ENCODE measurements at regions of chr1 and their contacts with region 1.

Region 1: DNA sequence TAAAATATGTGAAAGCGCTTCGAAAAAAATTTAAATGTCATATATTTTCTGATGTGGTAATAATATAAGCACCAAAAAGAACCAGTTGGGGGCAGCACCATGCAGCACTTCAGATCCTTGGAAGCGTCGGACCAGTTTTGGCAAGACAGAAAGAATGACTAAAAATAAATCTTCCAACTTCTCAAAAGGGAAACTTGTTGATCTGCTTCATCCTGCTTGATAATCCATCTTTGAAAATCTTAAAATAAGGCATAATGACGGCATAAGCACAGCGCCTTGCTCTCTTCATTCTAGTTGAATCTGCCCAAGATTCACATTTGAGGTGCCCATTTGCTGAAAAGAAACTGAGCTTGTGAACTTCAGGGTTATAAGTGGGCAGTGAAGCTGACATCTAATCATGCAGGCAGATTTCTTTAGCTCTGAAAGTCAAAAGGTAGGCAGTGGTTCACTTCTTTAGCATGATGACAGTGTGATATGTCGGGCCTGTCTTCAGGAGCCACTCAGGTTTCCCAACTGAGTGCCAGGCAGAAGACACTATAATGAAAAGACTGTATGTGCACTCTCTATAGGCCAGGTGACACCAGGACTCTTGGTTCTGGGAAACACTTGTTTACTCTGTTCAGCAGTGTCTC is 19.8 kb upstream of the MUTYH start:
- DNase-seq: peak; percentile 58
- H3K4me3 Mint-ChIP-seq: no peak overlapping the region
- H3K27ac Mint-ChIP-seq: no peak overlapping the region
- H3K4me1 Mint-ChIP-seq: peaks cover 17% of the 10 kb centered on the region
- H3K27me3 Mint-ChIP-seq: no peaks in the 10 kb centered on the region
- CTCF ChIP-seq: no peak

Region 2: GRCh38 chr1:45221716-45222115 is 138.3 kb before region 1 on chr1:
- CTCF ChIA-PET with region 1: no interaction called
- intact Hi-C with region 1: no loop called
- DNase-seq: no peak
- H3K4me3 Mint-ChIP-seq: no peak overlapping the region
- H3K27ac Mint-ChIP-seq: no peak overlapping the region
- H3K4me1 Mint-ChIP-seq: no peaks in the 10 kb centered on the region
- H3K27me3 Mint-ChIP-seq: peaks cover 28% of the 10 kb centered on the region
- CTCF ChIP-seq: no peak

Region 3: DNA sequence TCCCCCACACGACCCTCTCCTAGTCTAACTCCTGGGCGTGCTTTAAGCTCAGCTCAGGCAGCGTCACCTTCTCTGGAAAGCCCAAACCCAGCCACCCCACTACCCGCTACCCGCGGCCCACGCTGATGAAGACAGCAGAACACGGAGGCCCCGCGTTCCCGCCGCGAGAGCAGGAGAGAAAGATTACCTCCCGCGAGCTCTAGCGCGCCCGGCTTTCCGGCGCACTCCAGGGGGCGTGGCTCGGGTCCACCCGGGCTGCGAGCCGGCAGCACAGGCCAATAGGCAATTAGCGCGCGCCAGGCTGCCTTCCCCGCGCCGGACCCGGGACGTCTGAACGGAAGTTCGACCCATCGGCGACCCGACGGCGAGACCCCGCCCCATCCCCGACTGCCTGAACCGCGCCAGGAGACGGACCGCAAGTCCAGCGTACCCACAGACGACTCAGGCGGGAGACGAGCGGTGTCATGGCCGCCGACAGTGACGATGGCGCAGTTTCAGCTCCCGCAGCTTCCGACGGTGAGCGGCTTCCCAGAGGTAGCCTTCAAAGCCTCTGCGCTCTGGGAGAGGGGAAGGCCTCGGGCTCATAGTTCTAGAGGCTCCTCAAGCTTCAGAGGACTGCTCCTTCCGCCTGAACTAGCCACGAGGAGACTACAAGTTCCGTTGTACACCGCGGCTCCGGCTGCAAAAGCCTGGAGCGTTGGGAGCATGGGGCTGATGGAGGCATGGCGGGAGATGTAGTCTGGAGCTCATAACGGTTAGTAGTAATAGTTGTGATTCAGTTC is 20.0 kb before region 1 on chr1 and contains the starts of genes MUTYH and TOE1:
- CTCF ChIA-PET with region 1: interaction called, 16 read pairs
- intact Hi-C with region 1: no loop called
- DNase-seq: peak; percentile 98
- H3K4me3 Mint-ChIP-seq: peak within 1 kb of the TSS; percentile 84
- H3K27ac Mint-ChIP-seq: peak within 1 kb of the TSS; percentile 75
- H3K4me1 Mint-ChIP-seq: peaks cover 38% of the 10 kb centered on the region
- H3K27me3 Mint-ChIP-seq: no peaks in the 10 kb centered on the region
- CTCF ChIP-seq: no peak
- total RNA-seq, gene MUTYH: 48.1 and 53.1 TPM in 2 replicates
- total RNA-seq, gene TOE1: 14.2 TPM in 2 replicates

Region 4: GRCh38 chr1:45393718-45394302 is 33.8 kb after region 1 on chr1:
- CTCF ChIA-PET with region 1: no interaction called
- intact Hi-C with region 1: no loop called
- DNase-seq: no peak
- H3K4me3 Mint-ChIP-seq: no peak overlapping the region
- H3K27ac Mint-ChIP-seq: no peak overlapping the region
- H3K4me1 Mint-ChIP-seq: no peaks in the 10 kb centered on the region
- H3K27me3 Mint-ChIP-seq: no peaks in the 10 kb centered on the region
- CTCF ChIP-seq: no peak

Region 5: DNA sequence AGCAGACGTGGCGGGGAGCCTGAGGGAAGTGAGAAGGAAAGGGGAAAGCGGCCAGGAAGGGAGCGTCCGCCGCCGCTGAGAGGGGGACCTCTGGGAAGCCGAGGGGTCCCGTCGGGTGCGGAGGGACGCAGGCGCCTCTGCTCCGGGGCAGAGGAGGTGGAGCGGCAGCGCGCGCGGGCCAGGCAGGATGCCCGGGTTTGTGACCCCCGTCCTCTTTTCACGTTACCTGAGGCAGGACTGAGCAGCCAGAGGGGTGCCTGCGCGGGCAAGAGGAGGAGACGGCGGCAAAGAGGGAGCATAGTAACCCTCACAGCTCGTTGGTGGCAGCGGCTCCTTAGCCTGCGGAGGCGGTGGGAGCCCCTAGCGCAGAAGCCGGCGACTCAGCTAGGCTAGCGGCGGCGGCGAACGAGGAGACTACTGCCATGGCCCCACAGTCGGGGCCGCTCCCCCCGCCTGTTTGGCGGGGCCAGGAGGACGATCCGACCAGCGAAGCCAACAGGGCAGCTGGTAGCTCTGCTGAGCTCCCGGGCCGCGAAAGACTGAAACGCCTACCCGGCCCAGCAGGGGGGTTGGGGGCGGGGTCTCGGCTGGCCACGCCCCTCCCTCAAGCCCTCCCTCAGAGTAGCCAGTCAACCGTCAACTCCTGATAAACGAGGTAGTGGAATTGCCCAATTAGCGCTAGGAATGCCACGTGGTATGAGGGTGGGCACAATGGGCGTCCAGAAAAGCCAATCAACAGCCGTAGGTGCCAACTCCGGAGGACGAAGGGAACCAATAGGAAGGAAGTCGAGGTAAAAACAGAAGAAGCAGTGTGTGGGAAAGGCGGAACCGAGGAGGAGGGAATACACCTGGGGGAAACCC is 130.9 kb after region 1 on chr1 and contains the start of gene TESK2:
- CTCF ChIA-PET with region 1: interaction called, 16 read pairs
- intact Hi-C with region 1: loop called (anchors 1 kb)
- DNase-seq: peak; percentile 98
- H3K4me3 Mint-ChIP-seq: no peak within 1 kb of the TSS
- H3K27ac Mint-ChIP-seq: no peak within 1 kb of the TSS
- H3K4me1 Mint-ChIP-seq: no peaks in the 10 kb centered on the region
- H3K27me3 Mint-ChIP-seq: no peaks in the 10 kb centered on the region
- CTCF ChIP-seq: no peak
- total RNA-seq, gene TESK2: 1.8 and 2.3 TPM in 2 replicates

Region 6: GRCh38 chr1:45569962-45570581 is 210.1 kb after region 1 on chr1:
- CTCF ChIA-PET with region 1: interaction called, 4 read pairs
- intact Hi-C with region 1: loop called (anchors 5 kb)
- DNase-seq: peak; percentile 67
- H3K4me3 Mint-ChIP-seq: no peak overlapping the region
- H3K27ac Mint-ChIP-seq: no peak overlapping the region
- H3K4me1 Mint-ChIP-seq: no peaks in the 10 kb centered on the region
- H3K27me3 Mint-ChIP-seq: no peaks in the 10 kb centered on the region
- CTCF ChIP-seq: peak; percentile 92

Measured in Calu3 (cell line).